ENCODE measurements at regions of chr15 and their contacts with region 1.

Region 1: GRCh38 chr15:40893733-40894688 is at the start of gene VPS18:
- DNase-seq: peak; percentile 99 to 100 (median 99)
- H3K4me3 ChIP-seq: peak within 1 kb of the TSS; percentile 65 to 100 (median 93)
- H3K27ac ChIP-seq: peak within 1 kb of the TSS; percentile 44 to 97 (median 89)
- H3K27me3 ChIP-seq: no peaks in the 10 kb centered on the region
- CTCF ChIP-seq: peak; percentile 89 to 100 (median 99)
- total RNA-seq, gene VPS18: 19.3 to 39.4 (median 29.9) TPM

Region 2: GRCh38 chr15:40564591-40565332 is 329.2 kb before region 1 on chr15 and contains the start of gene CCDC32:
- intact Hi-C with region 1: loop called in 1 of 2 experiments (anchors 10 kb)
- DNase-seq: peak; percentile 98 to 100 (median 100)
- H3K4me3 ChIP-seq: peak within 1 kb of the TSS; percentile 61 to 99 (median 86)
- H3K27ac ChIP-seq: peak within 1 kb of the TSS in 57 of 59 donors; percentile 32 to 94 (median 85)
- H3K27me3 ChIP-seq: no peaks in the 10 kb centered on the region
- CTCF ChIP-seq: peak in 24 of 56 donors; percentile 8 to 64 (median 26)
- total RNA-seq, gene CCDC32: 15.7 to 49.5 (median 30.0) TPM

Region 3: GRCh38 chr15:40684381-40684780 is 209.6 kb before region 1 on chr15:
- intact Hi-C with region 1: loop called (anchors 2 to 5 kb)
- DNase-seq: no peak
- H3K4me3 ChIP-seq: no peak overlapping the region
- H3K27ac ChIP-seq: no peak overlapping the region
- H3K27me3 ChIP-seq: no peaks in the 10 kb centered on the region
- CTCF ChIP-seq: no peak

Region 4: GRCh38 chr15:40746916-40747514 is 147.0 kb before region 1 on chr15:
- intact Hi-C with region 1: loop called in 1 of 2 experiments (anchors 5 kb)
- DNase-seq: no peak
- H3K4me3 ChIP-seq: no peak overlapping the region
- H3K27ac ChIP-seq: peak overlapping the region in 7 of 59 donors; percentile 22 to 67 (median 27)
- H3K27me3 ChIP-seq: no peaks in the 10 kb centered on the region
- CTCF ChIP-seq: no peak

Region 5: GRCh38 chr15:40807028-40807887 is 86.8 kb before region 1 on chr15 and contains the starts of genes DNAJC17 and ZFYVE19:
- intact Hi-C with region 1: loop called (anchors 2 to 5 kb)
- DNase-seq: peak; percentile 94 to 99 (median 98)
- H3K4me3 ChIP-seq: peak within 1 kb of the TSS; percentile 70 to 100 (median 95)
- H3K27ac ChIP-seq: peak within 1 kb of the TSS; percentile 75 to 99 (median 95)
- H3K27me3 ChIP-seq: no peaks in the 10 kb centered on the region
- CTCF ChIP-seq: peak in 24 of 56 donors; percentile 3 to 58 (median 20)
- total RNA-seq, gene DNAJC17: 17.9 to 54.4 (median 34.3) TPM
- total RNA-seq, gene ZFYVE19: 17.6 to 48.7 (median 30.8) TPM

Region 6: GRCh38 chr15:41116116-41116871 is 222.3 kb after region 1 on chr15 and contains the start of gene INO80:
- intact Hi-C with region 1: loop called in 1 of 2 experiments (anchors 10 kb)
- DNase-seq: peak; percentile 87 to 99 (median 96)
- H3K4me3 ChIP-seq: peak within 1 kb of the TSS; percentile 68 to 99 (median 92)
- H3K27ac ChIP-seq: peak within 1 kb of the TSS; percentile 89 to 100 (median 99)
- H3K27me3 ChIP-seq: no peaks in the 10 kb centered on the region
- CTCF ChIP-seq: peak in 27 of 56 donors; percentile 7 to 45 (median 26)
- total RNA-seq, gene INO80: 15.8 to 35.4 (median 24.2) TPM

Measured in dorsolateral prefrontal cortex (tissue), 120 donors.